Activated CD8-positive, alpha-beta T cell treated with anti-CD3 and anti-CD28 coated beads for 36 hours (primary cell): ENCODE measurements at regions of chr1 and their contacts with region 1.

Region 1: DNA sequence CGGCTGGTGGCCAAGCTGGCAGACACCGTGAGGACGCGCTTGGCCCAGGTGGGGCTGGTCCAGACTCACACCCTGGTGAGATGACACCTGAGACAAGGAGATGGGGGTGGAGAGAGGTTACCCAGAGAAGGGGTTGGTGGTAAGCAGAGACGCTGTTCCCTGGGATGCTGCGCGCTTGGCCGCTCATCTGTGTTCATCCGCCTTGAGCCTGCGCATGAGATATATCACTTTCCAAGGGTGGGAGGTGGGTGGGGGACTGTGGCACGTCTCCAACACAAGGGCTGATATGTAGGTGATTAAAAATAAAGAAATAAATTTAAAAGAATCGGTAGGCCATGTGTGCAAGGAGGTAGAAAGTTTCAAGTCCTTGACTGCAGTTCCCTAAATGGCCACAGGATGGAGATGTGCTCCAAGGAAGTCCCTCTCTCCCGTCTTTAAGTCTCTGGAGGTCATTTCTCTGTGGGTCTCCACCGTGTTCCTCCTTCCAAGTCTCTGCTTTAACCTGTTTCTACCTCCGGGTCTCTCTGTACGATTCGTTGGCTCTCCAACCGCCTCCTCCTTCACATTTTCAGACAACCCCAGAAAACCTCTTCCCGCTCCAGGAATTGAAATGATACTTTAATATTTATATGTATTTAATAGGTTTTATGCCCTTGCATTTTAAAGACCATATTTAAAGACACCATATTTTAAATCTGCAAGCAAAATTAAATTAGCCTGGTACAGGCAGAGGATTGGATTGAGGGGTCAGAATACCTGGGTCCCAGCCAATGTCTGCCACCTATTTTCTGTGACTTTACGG is 4.5 kb downstream of the TTC24 start:
- DNase-seq: peak; percentile 93
- ATAC-seq: peak; percentile 43
- H3K4me3 Mint-ChIP-seq: peak overlapping the region; percentile 90
- H3K27ac Mint-ChIP-seq: peak overlapping the region; percentile 99
- H3K4me1 Mint-ChIP-seq: peaks cover 15% of the 10 kb centered on the region
- H3K27me3 Mint-ChIP-seq: no peaks in the 10 kb centered on the region
- CTCF ChIP-seq: peak; percentile 98

Region 2: GRCh38 chr1:156456622-156457465 is 127.2 kb before region 1 on chr1:
- CTCF ChIA-PET with region 1: interaction called, 11 read pairs
- POLR2A ChIA-PET with region 1: interaction called, 4 read pairs
- intact Hi-C with region 1: no loop called
- DNase-seq: peak; percentile 99
- ATAC-seq: peak; percentile 90
- H3K4me3 Mint-ChIP-seq: peak overlapping the region; percentile 91
- H3K27ac Mint-ChIP-seq: peak overlapping the region; percentile 99
- H3K4me1 Mint-ChIP-seq: peaks cover 19% of the 10 kb centered on the region
- H3K27me3 Mint-ChIP-seq: no peaks in the 10 kb centered on the region
- CTCF ChIP-seq: peak; percentile 1

Region 3: DNA sequence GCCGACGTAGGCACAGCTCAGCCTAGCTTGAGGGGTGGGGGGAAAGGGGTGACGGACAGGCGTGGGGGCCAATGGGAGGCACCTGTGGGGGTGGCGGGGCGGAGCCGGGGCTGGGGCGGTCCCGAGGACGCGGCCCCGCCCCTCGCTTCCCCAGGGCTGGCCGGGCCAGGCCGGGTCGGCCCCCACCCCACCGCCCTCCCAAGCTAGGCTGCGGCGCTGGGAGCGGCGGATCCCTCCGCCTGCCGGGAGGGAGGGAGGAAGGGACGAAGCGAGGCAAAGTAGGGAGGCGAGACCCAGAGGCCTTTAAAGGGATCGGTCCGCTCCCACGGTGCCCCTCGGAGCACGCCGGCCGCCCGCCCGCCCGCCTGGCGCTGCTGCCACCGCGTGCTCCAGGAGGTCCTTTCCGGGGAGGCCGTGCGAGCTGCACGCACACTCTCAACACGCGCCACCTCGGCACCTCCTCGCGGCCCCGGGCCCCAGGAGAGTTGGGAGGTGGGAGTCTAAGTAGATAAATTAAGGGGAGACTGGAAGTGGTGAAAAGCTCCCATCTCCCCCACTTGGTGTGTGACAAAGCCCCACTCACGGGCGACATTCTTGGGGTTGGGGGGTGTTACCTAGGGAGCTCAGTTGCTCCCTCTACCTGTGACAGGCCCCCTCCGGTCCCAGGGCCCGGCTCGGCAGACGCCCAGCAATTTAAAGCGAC is 83.1 kb before region 1 on chr1:
- CTCF ChIA-PET with region 1: interaction called, 26 read pairs
- POLR2A ChIA-PET with region 1: interaction called, 14 read pairs
- intact Hi-C with region 1: loop called (anchors 5 kb)
- DNase-seq: peak; percentile 94
- ATAC-seq: peak; percentile 71
- H3K4me3 Mint-ChIP-seq: peak overlapping the region; percentile 79
- H3K27ac Mint-ChIP-seq: peak overlapping the region; percentile 95
- H3K4me1 Mint-ChIP-seq: peaks cover 74% of the 10 kb centered on the region
- H3K27me3 Mint-ChIP-seq: no peaks in the 10 kb centered on the region
- CTCF ChIP-seq: peak; percentile 55

Region 4: GRCh38 chr1:156571949-156572662 is 11.9 kb before region 1 on chr1 and contains the start of gene IQGAP3:
- CTCF ChIA-PET with region 1: interaction called, 12 read pairs
- POLR2A ChIA-PET with region 1: interaction called, 18 read pairs
- intact Hi-C with region 1: no loop called
- DNase-seq: peak; percentile 83
- ATAC-seq: peak; percentile 96
- H3K4me3 Mint-ChIP-seq: peak within 1 kb of the TSS; percentile 95
- H3K27ac Mint-ChIP-seq: peak within 1 kb of the TSS; percentile 81
- H3K4me1 Mint-ChIP-seq: peaks cover 16% of the 10 kb centered on the region
- H3K27me3 Mint-ChIP-seq: peaks cover 22% of the 10 kb centered on the region
- CTCF ChIP-seq: no peak
- total RNA-seq, gene IQGAP3: 14.4 to 14.9 TPM

Region 5: GRCh38 chr1:156601122-156601830 is 17.3 kb after region 1 on chr1 and contains the start of gene GPATCH4:
- CTCF ChIA-PET with region 1: interaction called, 27 read pairs
- POLR2A ChIA-PET with region 1: interaction called, 9 read pairs
- intact Hi-C with region 1: no loop called
- DNase-seq: peak; percentile 91
- ATAC-seq: peak; percentile 77
- H3K4me3 Mint-ChIP-seq: peak within 1 kb of the TSS; percentile 93
- H3K27ac Mint-ChIP-seq: peak within 1 kb of the TSS; percentile 97
- H3K4me1 Mint-ChIP-seq: peaks cover 32% of the 10 kb centered on the region
- H3K27me3 Mint-ChIP-seq: no peaks in the 10 kb centered on the region
- CTCF ChIP-seq: no peak
- total RNA-seq, gene GPATCH4: 50.7 to 51.0 TPM

Region 6: DNA sequence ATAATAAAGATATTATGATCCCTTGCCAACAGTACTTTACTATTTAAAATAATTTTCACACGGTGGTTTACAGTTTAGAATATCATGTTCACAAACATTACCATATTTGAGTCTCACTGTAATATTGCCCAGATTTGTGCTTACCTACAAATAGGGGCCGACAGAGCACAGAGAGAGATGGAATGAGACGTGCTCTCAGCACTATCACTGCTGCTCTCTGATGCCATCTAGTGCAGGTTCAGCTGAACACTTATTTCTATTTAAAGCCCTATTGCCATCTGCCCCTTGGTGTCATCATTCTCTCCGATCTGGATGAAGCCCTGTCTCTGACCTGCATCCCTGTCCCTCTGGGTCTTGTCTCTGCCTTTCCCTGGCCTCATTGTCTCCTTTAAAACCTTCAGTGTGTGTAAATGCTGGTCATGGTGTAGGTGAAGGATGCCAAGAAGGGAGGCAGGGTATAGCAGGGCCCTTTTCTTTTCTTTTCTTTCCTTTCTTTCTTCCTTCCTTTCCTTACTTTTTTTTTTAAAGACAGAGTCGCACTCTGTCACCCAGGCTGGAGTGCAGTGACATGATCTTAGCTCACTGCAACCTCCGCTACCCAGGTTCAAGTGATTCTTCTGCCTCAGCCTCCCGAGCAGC is 24.1 kb after region 1 on chr1:
- CTCF ChIA-PET with region 1: interaction called, 29 read pairs
- POLR2A ChIA-PET with region 1: interaction called, 3 read pairs
- intact Hi-C with region 1: loop called (anchors 2 kb)
- DNase-seq: peak; percentile 77
- ATAC-seq: peak; percentile 98
- H3K4me3 Mint-ChIP-seq: no peak overlapping the region
- H3K27ac Mint-ChIP-seq: peak overlapping the region; percentile 50
- H3K4me1 Mint-ChIP-seq: peaks cover 8% of the 10 kb centered on the region
- H3K27me3 Mint-ChIP-seq: peaks cover 3% of the 10 kb centered on the region
- CTCF ChIP-seq: peak; percentile 86

Region 7: DNA sequence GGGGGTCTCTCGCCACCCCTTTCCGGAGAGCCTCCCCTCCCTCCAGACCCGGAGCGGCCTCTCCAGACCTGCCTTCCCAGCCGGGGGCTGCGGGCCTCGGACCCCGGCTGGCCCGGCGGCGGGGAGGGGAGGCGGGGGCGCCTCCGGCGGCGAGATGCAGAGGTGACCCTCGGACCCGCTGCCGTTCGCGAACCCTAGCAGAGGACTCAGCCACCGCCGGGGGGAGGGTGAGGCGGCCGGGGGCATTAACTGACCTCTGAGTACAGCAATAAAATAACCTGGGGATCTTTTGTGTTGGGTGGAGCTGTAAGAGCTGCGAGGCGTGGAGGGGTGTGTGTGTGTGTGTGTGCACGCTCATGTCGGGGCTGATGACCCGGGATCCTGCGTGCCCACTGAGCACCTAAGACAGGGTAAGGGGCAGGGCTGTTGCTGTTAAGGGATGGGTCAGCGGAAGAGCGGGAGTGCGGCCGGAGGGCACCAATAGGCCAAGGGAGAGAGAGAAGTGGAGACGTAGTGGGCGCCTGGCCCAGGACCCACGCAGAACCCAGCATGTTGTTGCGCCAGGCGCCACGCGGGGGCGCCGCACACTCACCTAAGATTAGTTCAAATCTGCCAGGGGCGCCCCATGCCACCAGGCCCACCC is 41.5 kb after region 1 on chr1:
- CTCF ChIA-PET with region 1: interaction called, 10 read pairs
- POLR2A ChIA-PET with region 1: no interaction called
- intact Hi-C with region 1: no loop called
- DNase-seq: peak; percentile 74
- ATAC-seq: peak; percentile 74
- H3K4me3 Mint-ChIP-seq: peak overlapping the region; percentile 53
- H3K27ac Mint-ChIP-seq: no peak overlapping the region
- H3K4me1 Mint-ChIP-seq: peaks cover 10% of the 10 kb centered on the region
- H3K27me3 Mint-ChIP-seq: peaks cover 37% of the 10 kb centered on the region
- CTCF ChIP-seq: peak; percentile 96